ENCODE measurements at regions of chr10 and their contacts with region 1.

Region 1: GRCh38 chr10:72088889-72089575 is 681 bp upstream of the SPOCK2 start:
- DNase-seq: peak in 8 of 9 experiments; percentile 37 to 84 (median 71)
- ATAC-seq: peak; percentile 56
- H3K4me3 ChIP-seq: peak overlapping the region; percentile 96 to 98
- H3K4me3 Mint-ChIP-seq: peak overlapping the region; percentile 100
- H3K27ac ChIP-seq: peak overlapping the region; percentile 96 to 98
- H3K27ac Mint-ChIP-seq: peak overlapping the region; percentile 99
- H3K4me1 ChIP-seq: peaks cover 45% of the 10 kb centered on the region
- H3K4me1 Mint-ChIP-seq: peaks cover 49% of the 10 kb centered on the region
- H3K27me3 ChIP-seq: no peaks in the 10 kb centered on the region
- H3K27me3 Mint-ChIP-seq: no peaks in the 10 kb centered on the region
- CTCF ChIP-seq: no peak

Region 2: DNA sequence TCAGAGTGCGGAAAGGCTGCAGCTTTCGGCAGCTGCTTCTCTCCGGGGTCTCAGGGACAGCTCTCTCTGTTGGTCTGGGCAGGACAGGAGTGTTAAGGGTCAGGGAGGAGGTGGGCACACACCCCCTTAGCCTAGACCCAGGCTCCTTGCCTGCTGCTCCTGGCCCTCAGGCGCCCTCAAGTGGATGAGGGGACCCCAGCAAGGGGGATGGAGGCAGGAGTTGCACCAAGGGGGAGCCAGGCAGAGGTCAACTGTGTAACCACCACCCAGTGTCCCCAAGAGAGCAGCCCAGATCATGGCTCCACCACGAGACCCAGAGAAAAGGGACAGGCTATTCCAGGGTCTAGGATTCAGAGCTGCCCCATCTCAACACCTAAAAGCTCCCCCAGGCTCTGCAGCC is 27.5 kb before region 1 on chr10:
- CTCF ChIA-PET with region 1: no interaction called
- POLR2A ChIA-PET with region 1: interaction called, 10 read pairs
- intact Hi-C with region 1: no loop called
- DNase-seq: peak in 1 of 9 experiments; percentile 50
- ATAC-seq: peak; percentile 16
- H3K4me3 ChIP-seq: no peak overlapping the region
- H3K4me3 Mint-ChIP-seq: no peak overlapping the region
- H3K27ac ChIP-seq: peak overlapping the region in 1 of 2 experiments; percentile 14
- H3K27ac Mint-ChIP-seq: peak overlapping the region; percentile 83
- H3K4me1 ChIP-seq: peaks cover 8% of the 10 kb centered on the region
- H3K4me1 Mint-ChIP-seq: peaks cover 46% of the 10 kb centered on the region
- H3K27me3 ChIP-seq: no peaks in the 10 kb centered on the region
- H3K27me3 Mint-ChIP-seq: no peaks in the 10 kb centered on the region
- CTCF ChIP-seq: no peak

Region 3: GRCh38 chr10:72107325-72108003 is 18.4 kb after region 1 on chr10:
- CTCF ChIA-PET with region 1: interaction called, 5 read pairs
- POLR2A ChIA-PET with region 1: interaction called, 16 read pairs
- intact Hi-C with region 1: loop called (anchors 1 kb)
- DNase-seq: peak in 2 of 9 experiments; percentile 60 to 80
- ATAC-seq: peak; percentile 72
- H3K4me3 ChIP-seq: peak overlapping the region in 1 of 2 experiments; percentile 39
- H3K4me3 Mint-ChIP-seq: peak overlapping the region; percentile 72
- H3K27ac ChIP-seq: peak overlapping the region; percentile 36 to 50
- H3K27ac Mint-ChIP-seq: peak overlapping the region; percentile 93
- H3K4me1 ChIP-seq: peaks cover 84% of the 10 kb centered on the region
- H3K4me1 Mint-ChIP-seq: peaks cover 85% of the 10 kb centered on the region
- H3K27me3 ChIP-seq: no peaks in the 10 kb centered on the region
- H3K27me3 Mint-ChIP-seq: no peaks in the 10 kb centered on the region
- CTCF ChIP-seq: no peak

Region 4: DNA sequence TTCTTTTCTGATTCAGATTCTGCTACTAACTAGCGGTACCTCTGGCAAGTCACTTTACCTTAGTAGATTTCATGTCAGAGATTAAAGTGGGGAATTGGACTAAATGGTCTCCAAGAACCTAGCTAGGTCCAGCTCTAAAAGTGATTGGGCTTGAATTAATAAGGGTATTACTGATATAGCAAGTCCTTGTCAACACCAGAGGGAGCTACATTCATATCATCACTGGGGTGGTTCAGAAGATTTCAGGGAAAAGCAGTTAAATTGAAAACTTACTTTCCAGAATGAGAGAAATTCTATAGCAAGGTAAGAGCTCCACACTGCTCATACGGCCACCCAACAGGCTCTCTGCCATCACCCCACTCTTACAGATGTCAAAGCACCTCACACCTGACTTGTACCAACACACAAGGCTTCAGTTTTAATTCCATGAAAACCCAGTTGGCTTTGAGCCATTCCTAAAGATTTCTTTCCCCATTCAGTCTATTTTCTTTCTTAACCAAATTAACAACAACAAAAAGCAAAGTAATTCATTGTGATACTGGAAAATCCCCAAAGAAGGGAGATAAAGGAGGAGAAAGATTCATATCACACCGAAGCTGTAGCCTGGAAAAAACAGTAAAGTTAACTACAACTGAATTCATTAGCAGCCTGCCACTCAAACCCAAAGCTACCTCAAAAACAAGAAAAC is 37.3 kb after region 1 on chr10:
- CTCF ChIA-PET with region 1: interaction called, 24 read pairs
- POLR2A ChIA-PET with region 1: interaction called, 9 read pairs
- intact Hi-C with region 1: loop called in 1 of 2 experiments (anchors 10 kb)
- DNase-seq: peak in 2 of 9 experiments; percentile 43 to 57
- ATAC-seq: no peak
- H3K4me3 ChIP-seq: no peak overlapping the region
- H3K4me3 Mint-ChIP-seq: no peak overlapping the region
- H3K27ac ChIP-seq: no peak overlapping the region
- H3K27ac Mint-ChIP-seq: no peak overlapping the region
- H3K4me1 ChIP-seq: peaks cover 12% of the 10 kb centered on the region
- H3K4me1 Mint-ChIP-seq: peaks cover 29% of the 10 kb centered on the region
- H3K27me3 ChIP-seq: no peaks in the 10 kb centered on the region
- H3K27me3 Mint-ChIP-seq: no peaks in the 10 kb centered on the region
- CTCF ChIP-seq: no peak

Region 5: DNA sequence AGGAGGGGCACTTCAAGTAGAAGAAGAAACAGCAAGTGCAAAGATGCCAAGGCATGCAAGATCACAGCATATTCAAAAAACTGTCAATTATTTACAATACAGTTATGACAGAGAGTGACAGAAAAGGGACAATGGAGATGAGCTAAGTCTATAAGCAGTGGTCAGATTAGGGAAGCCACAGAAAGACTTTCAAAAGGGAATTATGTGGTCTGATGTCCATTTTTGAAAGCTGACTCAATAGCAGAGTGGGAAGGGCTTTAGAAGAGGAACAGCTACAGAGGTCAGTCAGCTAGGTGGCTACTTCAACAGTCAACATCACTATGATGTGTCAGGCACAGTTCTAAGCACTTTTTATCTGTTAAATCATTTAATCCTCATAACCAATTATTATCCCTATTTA is 44.5 kb after region 1 on chr10:
- CTCF ChIA-PET with region 1: interaction called, 6 read pairs
- POLR2A ChIA-PET with region 1: interaction called, 5 read pairs
- intact Hi-C with region 1: loop called in 1 of 2 experiments (anchors 10 kb)
- DNase-seq: no peak
- ATAC-seq: no peak
- H3K4me3 ChIP-seq: no peak overlapping the region
- H3K4me3 Mint-ChIP-seq: no peak overlapping the region
- H3K27ac ChIP-seq: no peak overlapping the region
- H3K27ac Mint-ChIP-seq: peak overlapping the region; percentile 30
- H3K4me1 ChIP-seq: peaks cover 41% of the 10 kb centered on the region
- H3K4me1 Mint-ChIP-seq: peaks cover 43% of the 10 kb centered on the region
- H3K27me3 ChIP-seq: no peaks in the 10 kb centered on the region
- H3K27me3 Mint-ChIP-seq: no peaks in the 10 kb centered on the region
- CTCF ChIP-seq: no peak

Region 6: GRCh38 chr10:72215652-72216549 is 126.9 kb after region 1 on chr10 and contains the starts of genes ANAPC16 and ASCC1:
- CTCF ChIA-PET with region 1: interaction called, 4 read pairs
- POLR2A ChIA-PET with region 1: interaction called, 14 read pairs
- intact Hi-C with region 1: loop called (anchors 1 to 2 kb)
- DNase-seq: peak; percentile 90 to 98 (median 95)
- ATAC-seq: peak; percentile 83
- H3K4me3 ChIP-seq: peak within 1 kb of the TSS; percentile 78 to 82
- H3K4me3 Mint-ChIP-seq: peak within 1 kb of the TSS; percentile 100
- H3K27ac ChIP-seq: peak within 1 kb of the TSS; percentile 61 to 93
- H3K27ac Mint-ChIP-seq: peak within 1 kb of the TSS; percentile 100
- H3K4me1 ChIP-seq: peaks cover 58% of the 10 kb centered on the region
- H3K4me1 Mint-ChIP-seq: peaks cover 54% of the 10 kb centered on the region
- H3K27me3 ChIP-seq: no peaks in the 10 kb centered on the region
- H3K27me3 Mint-ChIP-seq: no peaks in the 10 kb centered on the region
- CTCF ChIP-seq: no peak
- total RNA-seq, gene ANAPC16: 46.6 to 48.0 TPM
- total RNA-seq, gene ASCC1: 16.5 to 19.1 TPM

Region 7: GRCh38 chr10:72354478-72355213 is 265.6 kb after region 1 on chr10 and contains the start of gene DNAJB12:
- CTCF ChIA-PET with region 1: no interaction called
- POLR2A ChIA-PET with region 1: no interaction called
- intact Hi-C with region 1: loop called in 1 of 2 experiments (anchors 5 kb)
- DNase-seq: peak; percentile 76 to 95 (median 88)
- ATAC-seq: peak; percentile 82
- H3K4me3 ChIP-seq: peak within 1 kb of the TSS; percentile 96 to 98
- H3K4me3 Mint-ChIP-seq: peak within 1 kb of the TSS; percentile 98
- H3K27ac ChIP-seq: peak within 1 kb of the TSS; percentile 87 to 97
- H3K27ac Mint-ChIP-seq: peak within 1 kb of the TSS; percentile 96
- H3K4me1 ChIP-seq: peaks cover 19% of the 10 kb centered on the region
- H3K4me1 Mint-ChIP-seq: peaks cover 45% of the 10 kb centered on the region
- H3K27me3 ChIP-seq: no peaks in the 10 kb centered on the region
- H3K27me3 Mint-ChIP-seq: no peaks in the 10 kb centered on the region
- CTCF ChIP-seq: no peak
- total RNA-seq, gene DNAJB12: 33.9 to 37.5 TPM

Measured in CD8-positive, alpha-beta T cell (primary cell).